Gastrocnemius medialis (tissue), 4 donors: ENCODE measurements at regions of chr19 and their contacts with region 1.

Region 1: GRCh38 chr19:52369559-52370340 is at the start of gene ZNF880:
- DNase-seq: peak; percentile 73 to 82
- ATAC-seq: peak; percentile 95 to 99
- H3K4me3 ChIP-seq: peak within 1 kb of the TSS; percentile 69 to 85 (median 79)
- H3K27ac ChIP-seq: peak within 1 kb of the TSS; percentile 82 to 88 (median 85)
- H3K4me1 ChIP-seq: peaks cover 0 to 6% of the 10 kb centered on the region in 2 donors
- H3K27me3 ChIP-seq: no peaks in the 10 kb centered on the region
- CTCF ChIP-seq: no peak
- POLR2A ChIP-seq: peak in 1 of 2 donors; percentile 39
- total RNA-seq, gene ZNF880: 6.1 to 12.7 (median 7.9) TPM

Region 2: GRCh38 chr19:52307275-52307674 is 62.5 kb before region 1 on chr19:
- in situ Hi-C with region 1: loop called in 1 of 4 experiments (anchors 5 kb)
- intact Hi-C with region 1: no loop called
- DNase-seq: no peak
- ATAC-seq: no peak
- H3K4me3 ChIP-seq: peak overlapping the region in 1 of 4 donors; percentile 46
- H3K27ac ChIP-seq: no peak overlapping the region
- H3K4me1 ChIP-seq: no peaks in the 10 kb centered on the region
- H3K27me3 ChIP-seq: no peaks in the 10 kb centered on the region
- CTCF ChIP-seq: no peak
- POLR2A ChIP-seq: no peak

Region 3: DNA sequence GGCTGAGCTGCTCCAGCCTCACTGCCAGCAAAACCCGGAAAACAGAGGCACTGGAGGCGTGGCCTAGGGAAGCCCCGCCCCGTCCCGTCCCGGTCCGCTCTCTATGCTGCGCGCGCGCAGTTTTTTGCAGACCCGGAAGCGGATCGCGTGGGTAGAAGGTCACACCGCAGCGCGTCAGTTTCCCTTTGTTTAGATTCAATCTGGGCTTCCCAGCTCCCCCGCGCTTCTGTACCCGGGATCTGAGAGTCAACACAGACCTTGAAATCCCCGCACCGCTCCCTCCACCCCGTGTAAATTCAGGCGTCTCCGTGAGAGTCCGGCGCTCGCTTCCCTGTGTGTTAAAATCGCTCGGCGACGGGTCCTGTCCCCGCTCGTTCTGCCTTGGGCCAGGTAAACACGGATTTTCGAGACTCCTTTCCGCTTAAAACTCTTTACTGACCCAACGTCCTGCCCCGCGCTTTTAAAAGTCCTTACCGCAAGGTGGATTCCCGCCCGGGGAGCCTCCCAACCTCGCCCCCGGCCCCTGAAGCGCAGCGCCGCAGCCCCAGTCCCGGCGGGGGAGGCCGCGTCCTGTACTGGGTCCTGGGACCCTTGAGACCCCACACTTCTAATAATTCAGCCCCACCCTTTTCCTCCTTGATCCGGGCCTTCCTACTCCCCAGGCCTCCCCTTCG is 33.5 kb before region 1 on chr19 and contains the start of gene ZNF610:
- in situ Hi-C with region 1: no loop called
- intact Hi-C with region 1: loop called (anchors 1 kb)
- DNase-seq: peak; percentile 70 to 73
- ATAC-seq: peak; percentile 94 to 99
- H3K4me3 ChIP-seq: peak within 1 kb of the TSS; percentile 76 to 95 (median 90)
- H3K27ac ChIP-seq: peak within 1 kb of the TSS; percentile 72 to 81 (median 78)
- H3K4me1 ChIP-seq: peaks cover 6 to 8% of the 10 kb centered on the region in 2 donors
- H3K27me3 ChIP-seq: no peaks in the 10 kb centered on the region
- CTCF ChIP-seq: no peak
- POLR2A ChIP-seq: peak in 1 of 2 donors; percentile 46
- total RNA-seq, gene ZNF610: 0.61 to 0.71 TPM in 2 of 4 donors, not detected in the others

Region 4: GRCh38 chr19:52397310-52398080 is 27.7 kb after region 1 on chr19 and contains the start of gene ZNF528:
- in situ Hi-C with region 1: no loop called
- intact Hi-C with region 1: loop called (anchors 2 kb)
- DNase-seq: peak; percentile 83 to 88
- ATAC-seq: peak; percentile 94 to 95
- H3K4me3 ChIP-seq: peak within 1 kb of the TSS; percentile 80 to 97 (median 91)
- H3K27ac ChIP-seq: peak within 1 kb of the TSS; percentile 53 to 77 (median 74)
- H3K4me1 ChIP-seq: peaks cover 14 to 18% of the 10 kb centered on the region in 2 donors
- H3K27me3 ChIP-seq: no peaks in the 10 kb centered on the region
- CTCF ChIP-seq: no peak
- POLR2A ChIP-seq: peak in 1 of 2 donors; percentile 50
- total RNA-seq, gene ZNF528: 2.9 to 11.2 (median 5.5) TPM